Calu3 (cell line): ENCODE measurements at regions of chr9 and their contacts with region 1.

Region 1: GRCh38 chr9:137070201-137070905 is at the start of gene SAPCD2:
- DNase-seq: peak; percentile 83
- H3K4me3 Mint-ChIP-seq: peak within 1 kb of the TSS; percentile 70
- H3K27ac Mint-ChIP-seq: peak within 1 kb of the TSS; percentile 44
- H3K4me1 Mint-ChIP-seq: peaks cover 16% of the 10 kb centered on the region
- H3K27me3 Mint-ChIP-seq: no peaks in the 10 kb centered on the region
- CTCF ChIP-seq: no peak
- total RNA-seq, gene SAPCD2: 38.4 and 41.1 TPM in 2 replicates

Region 2: GRCh38 chr9:136885950-136886578 is 184.3 kb before region 1 on chr9 and contains the start of gene TRAF2:
- CTCF ChIA-PET with region 1: no interaction called
- intact Hi-C with region 1: no loop called
- DNase-seq: peak; percentile 96
- H3K4me3 Mint-ChIP-seq: peak within 1 kb of the TSS; percentile 86
- H3K27ac Mint-ChIP-seq: peak within 1 kb of the TSS; percentile 66
- H3K4me1 Mint-ChIP-seq: no peaks in the 10 kb centered on the region
- H3K27me3 Mint-ChIP-seq: no peaks in the 10 kb centered on the region
- CTCF ChIP-seq: no peak
- total RNA-seq, gene TRAF2: 47.8 and 50.5 TPM in 2 replicates

Region 3: GRCh38 chr9:137029058-137029936 is 41.1 kb before region 1 on chr9:
- CTCF ChIA-PET with region 1: interaction called, 10 read pairs
- intact Hi-C with region 1: no loop called
- DNase-seq: peak; percentile 79
- H3K4me3 Mint-ChIP-seq: peak overlapping the region; percentile 63
- H3K27ac Mint-ChIP-seq: no peak overlapping the region
- H3K4me1 Mint-ChIP-seq: peaks cover under 1% of the 10 kb centered on the region
- H3K27me3 Mint-ChIP-seq: no peaks in the 10 kb centered on the region
- CTCF ChIP-seq: no peak

Region 4: DNA sequence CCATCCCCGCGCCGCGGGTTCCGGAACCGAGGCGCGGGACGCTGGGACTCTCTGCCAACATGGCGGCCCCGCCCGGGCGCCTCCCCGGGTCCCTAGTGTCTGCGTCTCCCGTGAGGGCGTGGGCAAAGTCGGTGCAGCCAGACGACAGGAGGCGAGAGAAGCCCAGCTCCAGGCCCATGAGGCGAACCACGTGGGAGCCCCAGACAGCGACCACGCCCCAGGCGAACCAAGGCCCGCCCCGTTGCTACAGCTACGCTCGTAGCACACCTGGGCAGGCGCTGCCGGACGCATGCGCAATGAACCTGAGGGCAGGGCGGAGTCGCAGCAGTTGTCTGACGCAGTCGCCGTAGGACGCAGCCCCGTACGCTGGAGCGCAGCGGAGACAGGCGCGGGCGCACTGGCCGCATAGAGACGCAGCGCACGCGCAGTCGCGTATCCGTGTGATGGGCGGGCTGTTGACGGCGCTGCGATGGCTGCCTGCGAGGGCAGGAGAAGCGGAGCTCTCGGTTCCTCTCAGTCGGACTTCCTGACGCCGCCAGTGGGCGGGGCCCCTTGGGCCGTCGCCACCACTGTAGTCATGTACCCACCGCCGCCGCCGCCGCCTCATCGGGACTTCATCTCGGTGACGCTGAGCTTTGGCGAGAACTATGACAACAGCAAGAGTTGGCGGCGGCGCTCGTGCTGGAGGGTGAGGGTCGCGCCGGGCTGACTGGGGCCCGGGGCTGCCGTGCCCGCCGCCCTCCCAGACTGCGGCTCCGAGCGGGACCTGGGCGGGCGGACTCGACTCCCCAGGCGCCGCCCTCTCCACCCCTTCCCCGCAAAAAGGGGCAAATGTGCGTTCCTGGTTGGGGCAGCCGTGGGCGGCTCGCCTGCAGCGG is 16.4 kb after region 1 on chr9 and contains the start of gene MAN1B1:
- CTCF ChIA-PET with region 1: interaction called, 12 read pairs
- intact Hi-C with region 1: no loop called
- DNase-seq: peak; percentile 98
- H3K4me3 Mint-ChIP-seq: peak within 1 kb of the TSS; percentile 79
- H3K27ac Mint-ChIP-seq: peak within 1 kb of the TSS; percentile 92
- H3K4me1 Mint-ChIP-seq: peaks cover 6% of the 10 kb centered on the region
- H3K27me3 Mint-ChIP-seq: no peaks in the 10 kb centered on the region
- CTCF ChIP-seq: no peak
- total RNA-seq, gene MAN1B1: 61.4 and 65.6 TPM in 2 replicates

Region 5: DNA sequence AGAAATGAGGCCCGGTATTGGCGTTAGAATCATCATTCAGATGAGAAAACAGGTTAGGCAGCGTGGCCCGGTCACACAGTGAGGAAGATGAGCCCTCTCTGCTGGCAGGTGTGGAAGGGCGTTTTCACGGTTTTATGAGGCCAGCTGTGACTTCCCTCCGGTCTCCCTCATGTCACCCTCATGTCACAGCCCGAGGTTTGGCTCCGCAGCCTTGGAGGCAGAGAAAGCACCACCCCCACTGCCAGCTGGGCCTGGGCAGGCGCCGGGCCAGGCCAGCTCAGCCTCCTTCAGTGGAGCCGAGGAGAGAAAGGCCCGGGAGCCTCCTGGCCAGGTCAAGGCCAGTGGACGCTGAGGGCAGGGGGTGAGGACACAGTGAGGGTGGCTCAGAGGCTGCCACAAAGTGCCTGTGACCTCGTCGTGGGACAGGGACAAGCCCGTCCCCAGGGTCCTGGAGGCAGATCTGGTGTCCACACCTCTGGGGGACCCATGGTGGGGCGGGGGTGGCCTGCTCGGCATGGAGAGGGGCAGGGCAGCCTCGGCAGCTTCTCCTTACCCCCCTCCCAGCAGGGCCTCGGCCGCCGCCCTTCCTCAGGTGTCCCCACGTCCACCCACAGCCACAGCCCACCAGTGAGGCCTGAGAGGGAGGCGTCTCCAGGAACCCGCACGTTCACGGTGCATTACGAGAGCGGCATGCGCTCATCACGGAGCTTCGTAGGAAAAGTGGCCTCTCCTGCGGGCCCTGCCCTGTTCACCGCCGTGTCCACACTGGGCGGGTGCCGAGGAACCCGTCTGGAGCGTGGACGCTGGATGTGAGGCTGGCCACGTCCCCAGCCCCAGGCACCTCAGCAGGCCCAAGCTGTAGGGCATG is 320.4 kb after region 1 on chr9:
- CTCF ChIA-PET with region 1: no interaction called
- intact Hi-C with region 1: no loop called
- DNase-seq: no peak
- H3K4me3 Mint-ChIP-seq: no peak overlapping the region
- H3K27ac Mint-ChIP-seq: no peak overlapping the region
- H3K4me1 Mint-ChIP-seq: no peaks in the 10 kb centered on the region
- H3K27me3 Mint-ChIP-seq: no peaks in the 10 kb centered on the region
- CTCF ChIP-seq: no peak

Region 6: GRCh38 chr9:137705443-137706293 is 635.3 kb after region 1 on chr9:
- CTCF ChIA-PET with region 1: no interaction called
- intact Hi-C with region 1: no loop called
- DNase-seq: no peak
- H3K4me3 Mint-ChIP-seq: no peak overlapping the region
- H3K27ac Mint-ChIP-seq: no peak overlapping the region
- H3K4me1 Mint-ChIP-seq: no peaks in the 10 kb centered on the region
- H3K27me3 Mint-ChIP-seq: no peaks in the 10 kb centered on the region
- CTCF ChIP-seq: no peak